Transverse colon (tissue), 4 donors: ENCODE measurements at regions of chr15 and their contacts with region 1.

Region 1: GRCh38 chr15:51641528-51642130 is 19.1 kb upstream of the DMXL2 start:
- DNase-seq: no peak
- H3K4me3 ChIP-seq: no peak overlapping the region
- H3K27ac ChIP-seq: no peak overlapping the region
- H3K4me1 ChIP-seq: peaks cover 3 to 18% (median 4%) of the 10 kb centered on the region in 4 donors
- H3K27me3 ChIP-seq: no peaks in the 10 kb centered on the region
- CTCF ChIP-seq: no peak
- EP300 ChIP-seq: no peak
- POLR2A ChIP-seq: no peak

Region 2: DNA sequence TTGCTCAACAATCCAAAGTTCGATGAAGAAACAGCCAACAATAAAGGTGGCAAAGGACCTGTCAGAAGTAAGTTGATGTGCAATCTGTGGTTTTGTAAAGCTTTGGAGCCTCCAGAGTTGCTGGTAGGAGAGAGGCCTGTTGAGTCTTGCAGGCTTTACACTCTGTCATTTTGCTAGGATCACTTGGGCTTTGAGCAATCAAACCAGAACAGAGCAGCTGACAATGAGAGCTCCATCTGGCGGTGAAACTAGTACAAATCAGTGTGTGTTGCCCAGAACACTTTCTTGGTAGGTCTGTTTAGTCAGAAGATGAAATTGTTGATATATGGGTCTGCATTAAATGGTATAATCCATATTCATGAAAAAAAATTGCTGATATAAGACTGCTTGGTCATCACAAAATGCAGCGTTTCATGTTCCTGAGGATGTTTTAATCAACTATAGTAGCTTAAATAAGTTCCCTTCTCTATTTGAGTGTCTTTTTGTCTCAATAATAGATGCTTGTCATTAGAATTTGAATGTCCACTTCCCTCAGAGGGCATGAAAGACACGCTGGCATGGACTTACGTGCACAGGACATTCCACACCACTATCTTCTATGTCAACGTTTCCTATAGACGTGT is 135.4 kb after region 1 on chr15:
- in situ Hi-C with region 1: loop called in 1 of 4 experiments (anchors 5 kb)
- intact Hi-C with region 1: loop called (anchors 2 kb)
- DNase-seq: peak; percentile 69
- H3K4me3 ChIP-seq: no peak overlapping the region
- H3K27ac ChIP-seq: no peak overlapping the region
- H3K4me1 ChIP-seq: peaks cover 0 to 12% (median 0%) of the 10 kb centered on the region in 4 donors
- H3K27me3 ChIP-seq: no peaks in the 10 kb centered on the region
- CTCF ChIP-seq: peak; percentile 62 to 75 (median 70)
- EP300 ChIP-seq: no peak
- POLR2A ChIP-seq: no peak